Mammary epithelial cell (primary cell): ENCODE measurements at regions of chr13 and their contacts with region 1.

Region 1: DNA sequence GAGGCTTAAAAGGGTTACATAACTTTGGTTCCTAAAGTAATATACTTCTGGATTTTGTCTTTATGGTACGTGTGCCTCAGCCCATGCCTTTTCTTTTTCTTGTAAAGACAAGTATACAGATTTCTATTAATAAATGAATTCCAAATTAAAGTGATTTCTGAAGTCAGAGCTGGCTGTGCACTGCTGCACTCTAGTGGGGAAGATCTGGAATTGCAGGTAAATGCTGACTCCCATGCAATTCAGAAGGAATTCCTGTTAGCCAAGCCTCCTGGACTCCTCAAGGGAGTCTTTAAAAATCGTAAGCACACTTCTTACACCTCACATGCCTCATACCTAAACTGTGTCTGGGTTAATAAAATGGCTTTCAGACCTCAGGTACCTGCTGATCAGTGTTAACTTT is 118.4 kb upstream of the SLC7A1 start:
- DNase-seq: peak; percentile 12
- H3K4me3 ChIP-seq: no peak overlapping the region
- H3K27ac ChIP-seq: no peak overlapping the region
- H3K4me1 ChIP-seq: no peaks in the 10 kb centered on the region
- H3K27me3 ChIP-seq: peaks cover 2% of the 10 kb centered on the region
- CTCF ChIP-seq: peak; percentile 59 to 84

Region 2: DNA sequence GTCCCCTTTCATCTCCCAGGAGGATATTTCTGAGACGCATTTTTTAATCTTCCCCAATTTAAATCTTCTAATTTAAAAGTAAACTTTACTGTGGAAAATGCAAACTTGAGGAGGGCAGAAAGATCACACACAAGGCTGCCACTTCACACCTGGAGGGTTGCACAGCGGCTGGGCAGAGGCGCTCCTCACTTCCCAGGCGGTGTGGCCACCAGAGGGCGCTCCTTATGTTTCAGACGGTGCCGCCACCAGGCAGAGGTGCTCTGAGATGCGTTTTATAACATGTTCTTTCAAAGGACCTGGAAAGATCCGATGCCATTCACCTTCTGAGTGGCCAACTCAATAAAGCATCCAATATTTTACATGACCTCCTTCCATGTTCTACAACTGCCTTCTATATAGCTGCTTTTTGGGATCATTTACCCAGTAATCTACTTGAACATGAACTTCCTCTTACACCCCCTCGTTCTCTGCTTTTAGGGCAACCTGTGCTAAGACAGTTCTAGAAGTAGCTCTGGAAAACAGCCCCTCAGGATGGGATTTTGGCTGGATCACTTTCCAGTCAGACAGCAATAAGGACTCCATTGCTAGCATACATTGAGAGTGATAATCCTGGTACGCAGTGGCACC is 908.5 kb before region 1 on chr13:
- CTCF ChIA-PET with region 1: no interaction called
- dilution Hi-C with region 1: no loop called
- in situ Hi-C with region 1: no loop called
- intact Hi-C with region 1: loop called (anchors 5 kb)
- DNase-seq: no peak
- H3K4me3 ChIP-seq: no peak overlapping the region
- H3K27ac ChIP-seq: no peak overlapping the region
- H3K4me1 ChIP-seq: no peaks in the 10 kb centered on the region
- H3K27me3 ChIP-seq: no peaks in the 10 kb centered on the region
- CTCF ChIP-seq: peak; percentile 28 to 31

Region 3: GRCh38 chr13:29573190-29573589 is 140.6 kb before region 1 on chr13:
- CTCF ChIA-PET with region 1: no interaction called
- dilution Hi-C with region 1: no loop called
- in situ Hi-C with region 1: no loop called
- intact Hi-C with region 1: no loop called
- DNase-seq: no peak
- H3K4me3 ChIP-seq: no peak overlapping the region
- H3K27ac ChIP-seq: no peak overlapping the region
- H3K4me1 ChIP-seq: peaks cover 15% of the 10 kb centered on the region
- H3K27me3 ChIP-seq: no peaks in the 10 kb centered on the region
- CTCF ChIP-seq: no peak

Region 4: DNA sequence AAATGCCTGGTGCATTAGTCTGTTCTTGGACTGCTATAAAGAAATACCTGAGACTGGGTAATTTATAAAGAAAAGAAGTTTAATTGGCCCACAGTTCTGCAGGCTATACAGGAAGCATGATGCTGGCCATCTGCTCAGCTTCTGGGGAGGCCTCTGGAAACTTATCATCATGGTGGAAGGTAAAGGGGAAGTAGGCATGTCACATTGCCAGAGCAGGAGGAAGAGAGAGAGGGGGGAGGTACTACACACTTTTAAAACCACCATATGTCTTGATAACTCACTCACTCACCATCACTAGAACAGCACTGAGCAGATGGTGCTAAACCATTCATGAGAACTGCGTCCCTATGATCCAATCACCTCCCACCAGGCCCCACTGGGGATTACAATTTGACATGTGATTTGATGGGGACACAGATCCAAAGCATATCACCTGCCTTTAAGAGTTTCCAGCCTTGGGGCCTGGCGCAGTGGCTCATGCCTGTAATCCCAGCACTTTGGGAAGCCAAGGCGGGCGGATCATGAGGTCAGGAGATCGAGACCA is 374.5 kb after region 1 on chr13:
- CTCF ChIA-PET with region 1: no interaction called
- dilution Hi-C with region 1: no loop called
- in situ Hi-C with region 1: no loop called
- intact Hi-C with region 1: no loop called
- DNase-seq: no peak
- H3K4me3 ChIP-seq: no peak overlapping the region
- H3K27ac ChIP-seq: no peak overlapping the region
- H3K4me1 ChIP-seq: no peaks in the 10 kb centered on the region
- H3K27me3 ChIP-seq: no peaks in the 10 kb centered on the region
- CTCF ChIP-seq: no peak